ENCODE measurements at regions of chr5 and their contacts with region 1.

Region 1: DNA sequence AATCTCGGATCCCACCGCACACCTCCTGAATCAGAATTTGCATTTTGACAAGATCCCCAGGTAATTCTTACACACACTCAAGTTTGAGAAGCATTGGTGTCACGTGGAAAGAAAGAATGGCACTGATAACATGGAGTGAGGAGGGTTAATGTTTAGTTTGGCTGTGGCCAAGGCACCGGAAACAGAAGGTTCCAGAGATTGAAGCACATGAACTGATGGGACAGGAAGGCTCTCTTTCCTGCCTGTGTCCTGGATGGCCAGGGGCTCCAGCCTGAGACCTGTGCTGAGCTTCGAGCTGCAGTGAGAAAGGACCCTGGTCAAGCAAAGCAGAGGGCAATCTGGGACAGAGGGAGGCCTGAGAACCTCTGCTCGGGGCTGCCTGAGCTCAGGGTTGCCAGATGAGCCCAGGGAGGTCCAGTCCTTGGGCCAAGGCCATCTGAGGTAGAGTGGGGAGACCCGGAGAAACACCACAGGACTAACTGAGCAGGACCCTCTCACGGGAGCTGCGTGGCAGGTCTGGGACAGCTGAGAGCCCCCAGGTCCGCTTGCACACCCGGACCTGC is 27.3 kb downstream of the AFAP1L1 start:
- DNase-seq: no peak
- H3K4me3 Mint-ChIP-seq: no peak overlapping the region
- H3K27ac Mint-ChIP-seq: no peak overlapping the region
- H3K4me1 Mint-ChIP-seq: peaks cover 9% of the 10 kb centered on the region
- H3K27me3 Mint-ChIP-seq: no peaks in the 10 kb centered on the region
- CTCF ChIP-seq: no peak

Region 2: GRCh38 chr5:149240354-149240998 is 58.4 kb before region 1 on chr5:
- CTCF ChIA-PET with region 1: no interaction called
- POLR2A ChIA-PET with region 1: no interaction called
- intact Hi-C with region 1: no loop called
- DNase-seq: no peak
- H3K4me3 Mint-ChIP-seq: no peak overlapping the region
- H3K27ac Mint-ChIP-seq: no peak overlapping the region
- H3K4me1 Mint-ChIP-seq: peaks cover 7% of the 10 kb centered on the region
- H3K27me3 Mint-ChIP-seq: no peaks in the 10 kb centered on the region
- CTCF ChIP-seq: no peak

Region 3: GRCh38 chr5:149310947-149311658 is 12.2 kb after region 1 on chr5:
- CTCF ChIA-PET with region 1: interaction called, 14 read pairs
- POLR2A ChIA-PET with region 1: interaction called, 18 read pairs
- intact Hi-C with region 1: no loop called
- DNase-seq: peak; percentile 50
- H3K4me3 Mint-ChIP-seq: no peak overlapping the region
- H3K27ac Mint-ChIP-seq: no peak overlapping the region
- H3K4me1 Mint-ChIP-seq: peaks cover 5% of the 10 kb centered on the region
- H3K27me3 Mint-ChIP-seq: no peaks in the 10 kb centered on the region
- CTCF ChIP-seq: no peak

Region 4: GRCh38 chr5:149317281-149318048 is 18.5 kb after region 1 on chr5:
- CTCF ChIA-PET with region 1: interaction called, 14 read pairs
- POLR2A ChIA-PET with region 1: interaction called, 7 read pairs
- intact Hi-C with region 1: no loop called
- DNase-seq: peak; percentile 71
- H3K4me3 Mint-ChIP-seq: no peak overlapping the region
- H3K27ac Mint-ChIP-seq: no peak overlapping the region
- H3K4me1 Mint-ChIP-seq: peaks cover 12% of the 10 kb centered on the region
- H3K27me3 Mint-ChIP-seq: no peaks in the 10 kb centered on the region
- CTCF ChIP-seq: peak; percentile 78

Region 5: DNA sequence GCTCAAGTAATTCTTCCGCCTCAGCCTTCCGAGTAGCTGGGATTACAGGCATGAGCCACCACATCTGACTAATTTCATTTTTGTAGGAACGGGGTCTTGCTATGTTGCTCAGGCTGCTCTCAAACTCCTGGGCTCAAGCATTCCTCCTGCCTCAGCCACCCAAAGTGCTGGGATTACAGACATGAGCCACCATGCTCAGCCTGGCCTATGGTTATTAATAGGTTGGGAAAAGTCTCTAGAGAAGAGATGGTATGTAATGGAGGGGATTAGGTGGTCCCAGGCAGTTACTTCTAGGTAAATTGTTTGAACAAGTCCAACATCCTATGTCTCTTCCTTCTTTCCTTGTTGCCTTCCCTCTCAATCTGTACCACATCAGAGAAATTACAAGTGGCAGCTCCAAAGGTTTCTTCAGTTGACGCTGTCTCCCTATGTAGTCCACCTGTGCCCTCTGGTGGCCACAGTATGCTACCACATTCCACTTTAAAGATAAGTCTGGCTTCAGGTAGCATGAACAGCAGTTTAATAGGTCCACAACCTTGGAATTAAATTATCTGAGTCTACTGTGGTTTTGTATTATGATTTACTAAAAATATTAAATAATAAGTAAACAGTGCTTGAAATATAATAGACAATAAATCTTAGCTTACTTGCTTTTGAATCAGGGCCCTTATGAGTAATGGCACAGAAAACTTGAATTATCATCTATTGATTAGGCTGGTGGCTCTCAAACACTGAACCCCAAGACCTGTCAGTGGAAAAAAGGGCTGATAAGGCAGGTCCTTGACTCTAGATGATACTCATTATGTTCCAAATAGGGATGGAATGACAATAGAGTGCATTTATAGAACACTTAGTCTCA is 691.8 kb after region 1 on chr5:
- CTCF ChIA-PET with region 1: no interaction called
- POLR2A ChIA-PET with region 1: no interaction called
- intact Hi-C with region 1: no loop called
- DNase-seq: peak; percentile 91
- H3K4me3 Mint-ChIP-seq: no peak overlapping the region
- H3K27ac Mint-ChIP-seq: no peak overlapping the region
- H3K4me1 Mint-ChIP-seq: peaks cover 10% of the 10 kb centered on the region
- H3K27me3 Mint-ChIP-seq: no peaks in the 10 kb centered on the region
- CTCF ChIP-seq: peak; percentile 96